Sigmoid colon (tissue), 7 donors: ENCODE measurements at regions of chr1 and their contacts with region 1.

Region 1: DNA sequence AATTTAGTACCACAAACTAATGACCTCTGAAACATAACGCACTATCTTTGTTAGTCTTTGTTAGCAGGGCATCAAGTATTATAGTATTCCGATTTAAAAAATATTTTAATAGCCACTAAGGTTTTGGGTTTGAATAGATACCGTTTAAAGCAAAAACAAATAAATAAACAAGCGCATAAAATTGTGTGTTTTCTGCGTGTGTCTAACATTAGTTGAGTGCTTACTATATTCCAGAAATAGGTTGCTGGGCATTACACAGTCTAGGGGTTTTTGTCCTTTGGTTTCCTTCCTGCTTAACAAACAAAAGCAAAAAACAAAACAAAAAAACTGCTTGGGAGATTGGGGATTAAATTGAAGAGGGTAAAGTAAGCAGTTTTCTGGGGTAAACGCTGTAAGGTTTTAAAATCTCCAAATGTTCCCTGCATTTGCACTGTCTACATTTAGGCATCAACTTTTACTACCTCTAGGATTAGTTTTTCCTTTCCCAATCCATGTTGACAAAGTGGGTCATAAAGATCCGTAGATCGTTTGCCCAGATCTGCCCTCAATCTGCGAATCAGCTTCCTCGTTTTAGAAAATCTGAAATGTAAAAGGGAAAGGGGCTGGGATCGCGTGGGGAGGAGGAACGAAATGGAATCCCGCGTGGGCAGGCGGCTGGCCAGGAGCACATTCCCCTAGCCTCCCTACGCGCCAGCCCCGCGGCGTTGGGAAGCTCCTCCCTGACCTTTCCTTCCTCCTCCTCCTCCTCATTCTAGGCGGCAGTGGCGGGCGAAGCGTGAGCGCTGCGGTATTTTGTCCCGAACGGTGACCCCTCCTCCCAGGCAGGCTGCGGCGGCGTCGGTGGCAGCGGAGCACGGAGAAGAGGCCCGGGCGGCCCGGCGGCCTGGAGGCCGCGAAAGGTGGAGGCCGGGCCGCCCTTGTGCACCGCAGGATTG is at the start of gene KCTD3:
- DNase-seq: peak; percentile 89
- H3K4me3 ChIP-seq: peak within 1 kb of the TSS; percentile 79 to 92 (median 90)
- H3K27ac ChIP-seq: peak within 1 kb of the TSS; percentile 93 to 97 (median 95)
- H3K4me1 ChIP-seq: peaks cover 0 to 38% (median 33%) of the 10 kb centered on the region in 4 donors
- H3K27me3 ChIP-seq: no peaks in the 10 kb centered on the region
- CTCF ChIP-seq: no peak
- EP300 ChIP-seq: no peak
- POLR2A ChIP-seq: peak; percentile 23 to 52
- total RNA-seq, gene KCTD3: 93.0 to 136 (median 124) TPM

Region 2: DNA sequence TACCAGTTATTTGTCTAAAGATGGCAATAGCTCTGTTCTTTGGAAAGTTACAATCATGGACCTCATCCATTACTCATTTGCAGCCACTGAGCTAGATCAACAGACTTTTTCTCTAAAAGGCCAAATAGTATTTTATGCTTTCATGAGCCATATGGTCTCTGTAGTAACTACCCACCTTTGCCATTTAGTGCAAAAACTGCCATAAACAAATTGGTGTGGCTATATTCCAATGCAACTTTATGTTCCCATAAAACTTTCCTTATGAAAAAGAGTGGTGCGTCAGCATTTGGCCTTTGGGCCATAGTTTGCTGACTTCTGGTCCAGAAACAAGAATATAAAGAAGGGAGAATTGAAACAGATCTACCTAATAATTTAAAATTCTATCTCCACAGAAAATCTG is 19.8 kb before region 1 on chr1:
- intact Hi-C with region 1: loop called (anchors 2 kb)
- DNase-seq: no peak
- H3K4me3 ChIP-seq: no peak overlapping the region
- H3K27ac ChIP-seq: peak overlapping the region in 3 of 4 donors; percentile 58
- H3K4me1 ChIP-seq: peaks cover 0 to 59% (median 15%) of the 10 kb centered on the region in 4 donors
- H3K27me3 ChIP-seq: no peaks in the 10 kb centered on the region
- CTCF ChIP-seq: no peak
- EP300 ChIP-seq: peak in 1 of 4 donors; percentile 7
- POLR2A ChIP-seq: no peak

Region 3: GRCh38 chr1:215599418-215600074 is 32.7 kb after region 1 on chr1:
- intact Hi-C with region 1: loop called (anchors 5 kb)
- DNase-seq: no peak
- H3K4me3 ChIP-seq: no peak overlapping the region
- H3K27ac ChIP-seq: peak overlapping the region in 3 of 4 donors; percentile 21 to 54 (median 37)
- H3K4me1 ChIP-seq: peaks cover 0 to 84% (median 33%) of the 10 kb centered on the region in 4 donors
- H3K27me3 ChIP-seq: no peaks in the 10 kb centered on the region
- CTCF ChIP-seq: no peak
- EP300 ChIP-seq: no peak
- POLR2A ChIP-seq: no peak

Region 4: GRCh38 chr1:215672482-215672881 is 105.7 kb after region 1 on chr1:
- intact Hi-C with region 1: no loop called
- DNase-seq: no peak
- H3K4me3 ChIP-seq: no peak overlapping the region
- H3K27ac ChIP-seq: no peak overlapping the region
- H3K4me1 ChIP-seq: no peaks in the 10 kb centered on the region
- H3K27me3 ChIP-seq: no peaks in the 10 kb centered on the region
- CTCF ChIP-seq: no peak
- EP300 ChIP-seq: no peak
- POLR2A ChIP-seq: no peak